ENCODE measurements at regions of chr15 and their contacts with region 1.

Region 1: GRCh38 chr15:59492389-59493377 is 54.7 kb downstream of the FAM81A start:
- DNase-seq: peak in 4 of 5 donors; percentile 68 to 92 (median 82)
- H3K4me3 ChIP-seq: no peak overlapping the region
- H3K27ac ChIP-seq: no peak overlapping the region
- H3K4me1 ChIP-seq: peaks cover 0 to 2% (median 0%) of the 10 kb centered on the region in 3 donors
- H3K27me3 ChIP-seq: no peaks in the 10 kb centered on the region
- CTCF ChIP-seq: peak; percentile 83

Region 2: GRCh38 chr15:58980351-58980939 is 512.2 kb before region 1 on chr15:
- intact Hi-C with region 1: loop called (anchors 5 kb)
- DNase-seq: peak in 2 of 5 donors; percentile 44 to 66
- H3K4me3 ChIP-seq: no peak overlapping the region
- H3K27ac ChIP-seq: no peak overlapping the region
- H3K4me1 ChIP-seq: no peaks in the 10 kb centered on the region
- H3K27me3 ChIP-seq: no peaks in the 10 kb centered on the region
- CTCF ChIP-seq: peak; percentile 55